H1 (cell line): ENCODE measurements at regions of chr21 and their contacts with region 1.

Region 1: DNA sequence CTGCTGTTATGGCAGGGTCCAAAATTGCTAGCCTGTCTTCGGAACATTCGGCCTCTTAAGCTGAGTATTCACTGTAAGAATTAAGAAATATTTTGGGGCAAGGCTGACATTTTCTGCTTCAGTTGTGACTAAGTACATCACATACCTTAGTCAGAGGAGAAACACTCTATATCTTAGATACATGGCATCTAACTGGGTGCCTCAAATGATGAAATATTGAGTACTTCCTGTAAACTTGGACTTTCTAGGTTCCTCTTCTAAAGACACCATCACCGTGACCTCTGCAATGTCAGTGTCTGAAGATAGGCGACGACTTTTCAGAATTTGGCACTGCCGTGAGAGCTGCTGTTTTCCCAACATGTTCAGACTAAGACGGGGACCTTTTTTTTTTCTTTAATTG is 65.6 kb downstream of the PCBP3 start:
- DNase-seq: no peak
- H3K4me3 ChIP-seq: no peak overlapping the region
- H3K27ac ChIP-seq: no peak overlapping the region
- H3K4me1 ChIP-seq: no peaks in the 10 kb centered on the region
- H3K27me3 ChIP-seq: peaks cover 0 to 1% (median 0%) of the 10 kb centered on the region in 4 experiments; a peak in 1 of 7 replicates
- CTCF ChIP-seq: no peak
- EP300 ChIP-seq: no peak
- POLR2A ChIP-seq: no peak
- RAD21 ChIP-seq: no peak

Region 2: GRCh38 chr21:45496968-45497845 is 212.0 kb before region 1 on chr21:
- CTCF ChIA-PET with region 1: no interaction called
- POLR2A ChIA-PET with region 1: no interaction called
- DNase-seq: no peak
- H3K4me3 ChIP-seq: no peak overlapping the region
- H3K27ac ChIP-seq: no peak overlapping the region
- H3K4me1 ChIP-seq: no peaks in the 10 kb centered on the region
- H3K27me3 ChIP-seq: no peaks in the 10 kb centered on the region
- CTCF ChIP-seq: no peak
- EP300 ChIP-seq: no peak
- POLR2A ChIP-seq: no peak
- RAD21 ChIP-seq: no peak

Region 3: DNA sequence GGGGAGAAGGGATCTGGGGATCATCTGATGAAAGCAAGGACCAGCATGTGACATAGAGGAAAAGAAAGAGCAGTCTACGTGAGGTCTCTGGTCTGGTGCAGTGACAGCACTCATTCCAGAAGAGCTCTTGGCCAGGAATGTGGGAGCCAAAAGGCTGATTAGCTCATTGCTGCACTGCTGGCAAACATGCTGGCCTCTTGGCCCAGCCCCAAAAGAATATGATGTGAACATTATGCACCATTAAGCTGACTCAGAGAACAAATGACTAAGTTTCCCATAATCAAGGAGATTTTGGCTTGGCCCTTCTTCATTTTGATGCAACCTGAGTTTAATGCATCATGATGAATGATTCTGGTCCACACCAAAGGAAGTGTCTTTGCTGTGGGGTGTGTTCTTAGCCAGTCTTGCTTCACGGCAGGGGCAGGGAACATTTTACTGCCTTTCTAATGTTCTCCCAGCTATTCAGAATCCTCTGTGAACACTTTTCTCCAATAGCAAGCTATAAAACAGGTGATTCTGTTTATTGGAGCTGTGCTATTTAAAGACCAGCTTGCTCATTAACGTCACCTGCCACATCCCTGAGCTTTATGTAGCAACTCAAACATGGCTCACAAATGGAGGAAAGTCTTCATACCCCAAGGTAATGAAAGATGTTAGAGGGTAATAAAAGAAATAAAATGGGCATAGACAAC is 10.5 kb before region 1 on chr21:
- CTCF ChIA-PET with region 1: interaction called, 13 read pairs
- POLR2A ChIA-PET with region 1: no interaction called
- DNase-seq: no peak
- H3K4me3 ChIP-seq: no peak overlapping the region
- H3K27ac ChIP-seq: no peak overlapping the region
- H3K4me1 ChIP-seq: no peaks in the 10 kb centered on the region
- H3K27me3 ChIP-seq: no peaks in the 10 kb centered on the region
- CTCF ChIP-seq: no peak
- EP300 ChIP-seq: no peak
- POLR2A ChIP-seq: no peak
- RAD21 ChIP-seq: no peak